ENCODE measurements at regions of chr4 and their contacts with region 1.

Region 1: GRCh38 chr4:123325241-123325681 is 71.3 kb upstream of the SPRY1 start:
- DNase-seq: peak; percentile 17
- ATAC-seq: peak; percentile 83
- H3K4me3 Mint-ChIP-seq: peak overlapping the region; percentile 61
- H3K27ac Mint-ChIP-seq: peak overlapping the region; percentile 72
- H3K4me1 Mint-ChIP-seq: peaks cover 38% of the 10 kb centered on the region
- H3K27me3 Mint-ChIP-seq: no peaks in the 10 kb centered on the region
- CTCF ChIP-seq: no peak

Region 2: GRCh38 chr4:123363729-123364128 is 38.5 kb after region 1 on chr4:
- CTCF ChIA-PET with region 1: no interaction called
- POLR2A ChIA-PET with region 1: no interaction called
- intact Hi-C with region 1: loop called (anchors 2 kb)
- DNase-seq: no peak
- ATAC-seq: peak; percentile 62
- H3K4me3 Mint-ChIP-seq: no peak overlapping the region
- H3K27ac Mint-ChIP-seq: no peak overlapping the region
- H3K4me1 Mint-ChIP-seq: peaks cover 19% of the 10 kb centered on the region
- H3K27me3 Mint-ChIP-seq: no peaks in the 10 kb centered on the region
- CTCF ChIP-seq: no peak

Region 3: GRCh38 chr4:123396307-123397143 is 71.3 kb after region 1 on chr4 and contains the start of gene SPRY1:
- CTCF ChIA-PET with region 1: no interaction called
- POLR2A ChIA-PET with region 1: no interaction called
- intact Hi-C with region 1: no loop called
- DNase-seq: peak; percentile 47
- ATAC-seq: peak; percentile 45
- H3K4me3 Mint-ChIP-seq: peak within 1 kb of the TSS; percentile 88
- H3K27ac Mint-ChIP-seq: peak within 1 kb of the TSS; percentile 59
- H3K4me1 Mint-ChIP-seq: peaks cover 32% of the 10 kb centered on the region
- H3K27me3 Mint-ChIP-seq: peaks cover 12% of the 10 kb centered on the region
- CTCF ChIP-seq: no peak
- total RNA-seq, gene SPRY1: 4.0 and 4.1 TPM in 2 replicates

Region 4: DNA sequence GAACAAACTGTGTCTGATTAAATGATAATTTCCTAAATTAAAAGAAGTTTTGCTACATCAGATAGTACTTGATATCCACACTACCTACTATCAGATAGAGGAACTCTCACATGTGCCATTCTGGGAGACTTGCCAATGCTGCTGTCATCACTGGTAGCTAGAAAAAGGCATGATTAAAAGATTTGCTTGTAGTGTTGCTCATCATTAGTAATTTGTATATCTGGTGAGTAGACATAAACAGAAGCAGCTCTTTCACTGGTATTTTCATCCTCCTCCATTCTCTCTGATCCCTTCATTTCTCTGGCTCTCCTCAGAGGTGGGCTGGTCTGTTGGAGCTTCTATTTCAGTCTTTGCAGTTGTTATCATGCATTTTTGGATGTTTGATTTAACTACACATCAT is 127.4 kb after region 1 on chr4:
- CTCF ChIA-PET with region 1: no interaction called
- POLR2A ChIA-PET with region 1: no interaction called
- intact Hi-C with region 1: loop called (anchors 10 kb)
- DNase-seq: no peak
- ATAC-seq: no peak
- H3K4me3 Mint-ChIP-seq: no peak overlapping the region
- H3K27ac Mint-ChIP-seq: no peak overlapping the region
- H3K4me1 Mint-ChIP-seq: peaks cover 51% of the 10 kb centered on the region
- H3K27me3 Mint-ChIP-seq: no peaks in the 10 kb centered on the region
- CTCF ChIP-seq: no peak